ENCODE measurements at regions of chr2 and their contacts with region 1.

Region 1: GRCh38 chr2:189783927-189784867 is at the starts of genes ORMDL1 and PMS1:
- DNase-seq: peak; percentile 96
- H3K4me3 ChIP-seq: peak within 1 kb of the TSS; percentile 80 to 94
- H3K27ac ChIP-seq: peak within 1 kb of the TSS; percentile 93 to 94
- H3K4me1 ChIP-seq: peaks cover 3 to 8% of the 10 kb centered on the region in 2 experiments
- H3K27me3 ChIP-seq: no peaks in the 10 kb centered on the region
- CTCF ChIP-seq: no peak
- EP300 ChIP-seq: no peak; a peak in 1 of 4 replicates
- RAD21 ChIP-seq: no peak
- polyA plus RNA-seq, gene ORMDL1: 99.2 and 196 TPM in 2 replicates
- polyA plus RNA-seq, gene PMS1: 7.7 and 9.6 TPM in 2 replicates

Region 2: GRCh38 chr2:189798312-189799029 is 14.3 kb after region 1 on chr2:
- CTCF ChIA-PET with region 1: interaction called, 11 read pairs
- POLR2A ChIA-PET with region 1: no interaction called
- DNase-seq: peak; percentile 21
- H3K4me3 ChIP-seq: no peak overlapping the region
- H3K27ac ChIP-seq: no peak overlapping the region
- H3K4me1 ChIP-seq: peaks cover 0 to 5% of the 10 kb centered on the region in 2 experiments; a peak in 3 of 4 replicates
- H3K27me3 ChIP-seq: no peaks in the 10 kb centered on the region
- CTCF ChIP-seq: peak; percentile 67
- EP300 ChIP-seq: no peak
- RAD21 ChIP-seq: peak; percentile 69

Region 3: GRCh38 chr2:189874586-189875320 is 90.6 kb after region 1 on chr2:
- CTCF ChIA-PET with region 1: no interaction called
- POLR2A ChIA-PET with region 1: no interaction called
- DNase-seq: no peak
- H3K4me3 ChIP-seq: no peak overlapping the region
- H3K27ac ChIP-seq: no peak overlapping the region
- H3K4me1 ChIP-seq: no peaks in the 10 kb centered on the region; a peak in 1 of 4 replicates
- H3K27me3 ChIP-seq: no peaks in the 10 kb centered on the region
- CTCF ChIP-seq: no peak
- EP300 ChIP-seq: no peak
- RAD21 ChIP-seq: no peak